ENCODE measurements at regions of chr19 and their contacts with region 1.

Region 1: GRCh38 chr19:56080669-56081401 is 40.3 kb downstream of the ZNF787 start:
- DNase-seq: peak; percentile 87
- H3K4me3 ChIP-seq: peak overlapping the region; percentile 63
- H3K27ac ChIP-seq: peak overlapping the region; percentile 24
- H3K4me1 ChIP-seq: peaks cover 10% of the 10 kb centered on the region
- CTCF ChIP-seq: peak; percentile 72

Region 2: GRCh38 chr19:55930996-55931515 is 149.8 kb before region 1 on chr19:
- CTCF ChIA-PET with region 1: no interaction called
- POLR2A ChIA-PET with region 1: no interaction called
- intact Hi-C with region 1: no loop called
- DNase-seq: no peak
- H3K4me3 ChIP-seq: no peak overlapping the region
- H3K27ac ChIP-seq: no peak overlapping the region
- H3K4me1 ChIP-seq: no peaks in the 10 kb centered on the region
- CTCF ChIP-seq: no peak

Region 3: DNA sequence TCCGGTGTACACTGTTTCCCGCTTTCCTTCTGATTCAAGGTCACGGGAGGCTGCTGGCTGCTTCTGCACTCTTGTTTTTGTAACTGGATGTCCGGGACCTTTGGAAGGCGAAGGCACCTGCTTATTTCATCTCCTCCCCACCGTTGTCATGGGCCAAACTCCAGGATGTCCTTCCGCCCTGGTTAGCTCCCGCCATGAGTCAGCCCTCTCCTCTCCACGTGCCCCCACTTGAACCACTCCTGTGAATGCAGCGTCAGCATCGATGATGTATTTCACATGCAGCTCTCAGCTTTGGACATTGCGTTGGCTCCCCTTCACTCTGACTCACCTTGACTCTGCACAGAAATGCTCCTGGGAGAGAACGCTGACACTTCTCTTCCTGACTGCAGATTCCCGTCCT is 89.4 kb after region 1 on chr19:
- CTCF ChIA-PET with region 1: no interaction called
- POLR2A ChIA-PET with region 1: interaction called, 5 read pairs
- intact Hi-C with region 1: loop called (anchors 2 kb)
- DNase-seq: no peak
- H3K4me3 ChIP-seq: no peak overlapping the region
- H3K27ac ChIP-seq: no peak overlapping the region
- H3K4me1 ChIP-seq: no peaks in the 10 kb centered on the region
- CTCF ChIP-seq: no peak

Region 4: DNA sequence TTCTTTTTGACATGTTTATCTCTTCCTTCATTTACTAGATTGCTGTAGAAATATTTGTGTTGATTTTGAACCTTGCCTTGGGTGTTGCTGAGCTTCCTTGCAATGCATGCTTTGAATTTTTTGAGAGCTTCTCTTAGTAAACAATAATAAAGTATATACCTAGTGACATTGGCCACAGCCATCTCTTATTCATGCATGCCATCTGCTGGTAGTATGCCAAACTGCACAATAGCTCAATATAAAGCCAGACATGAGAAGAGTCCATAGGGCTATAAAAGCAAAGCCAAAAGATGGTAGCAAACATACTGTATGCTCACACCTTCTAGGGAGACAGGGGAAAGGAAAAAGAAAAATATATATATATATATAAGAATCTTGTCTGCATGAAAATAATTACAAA is 252.7 kb after region 1 on chr19:
- CTCF ChIA-PET with region 1: interaction called, 3 read pairs
- POLR2A ChIA-PET with region 1: no interaction called
- intact Hi-C with region 1: loop called (anchors 2 kb)
- DNase-seq: peak; percentile 61
- H3K4me3 ChIP-seq: no peak overlapping the region
- H3K27ac ChIP-seq: no peak overlapping the region
- H3K4me1 ChIP-seq: no peaks in the 10 kb centered on the region
- CTCF ChIP-seq: peak; percentile 96